Endothelial cell of umbilical vein (primary cell): ENCODE measurements at regions of chr17 and their contacts with region 1.

Region 1: GRCh38 chr17:62819475-62820212 is 11.5 kb upstream of the MARCHF10 start:
- DNase-seq: peak; percentile 90
- H3K4me3 ChIP-seq: peak overlapping the region in 1 of 3 experiments; percentile 25
- H3K27ac ChIP-seq: peak overlapping the region; percentile 85
- H3K4me1 ChIP-seq: peaks cover 33% of the 10 kb centered on the region
- H3K27me3 ChIP-seq: no peaks in the 10 kb centered on the region
- CTCF ChIP-seq: no peak
- POLR2A ChIP-seq: no peak

Region 2: DNA sequence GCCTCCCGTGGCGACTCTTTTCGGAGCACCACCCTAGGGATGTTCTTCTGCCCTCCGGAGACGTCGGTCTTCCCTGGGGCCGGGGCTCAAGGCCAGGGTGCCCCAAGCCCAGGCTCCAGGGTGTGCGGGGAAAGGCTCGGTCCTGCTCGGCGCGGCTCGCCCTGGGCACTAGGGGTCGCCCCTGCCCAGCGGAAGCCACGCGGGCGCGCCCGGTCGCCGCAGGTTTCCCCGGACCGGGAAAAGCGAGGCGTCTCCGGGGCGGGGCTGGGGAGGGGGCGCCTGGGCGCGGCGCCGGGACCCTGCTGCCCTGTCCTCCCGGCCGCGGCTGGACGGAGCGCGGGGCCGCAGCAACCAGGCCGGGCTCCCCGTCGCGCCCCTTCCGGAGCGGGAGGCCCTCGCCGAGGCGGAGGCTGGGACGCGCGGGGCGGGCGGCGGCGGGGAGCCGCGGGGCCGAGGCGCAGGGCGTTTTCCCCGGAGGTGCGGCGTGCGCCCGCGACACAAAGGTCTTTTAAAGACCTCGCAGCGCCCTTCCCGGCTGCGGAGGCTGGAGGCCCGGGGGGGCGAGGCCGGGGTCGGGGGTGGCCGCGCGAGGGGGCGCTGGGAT is 115.8 kb before region 1 on chr17:
- CTCF ChIA-PET with region 1: no interaction called
- POLR2A ChIA-PET with region 1: no interaction called
- dilution Hi-C with region 1: no loop called
- intact Hi-C with region 1: loop called (anchors 5 kb)
- DNase-seq: peak; percentile 44
- H3K4me3 ChIP-seq: peak overlapping the region; percentile 23 to 56 (median 48)
- H3K27ac ChIP-seq: peak overlapping the region; percentile 14
- H3K4me1 ChIP-seq: peaks cover 32% of the 10 kb centered on the region
- H3K27me3 ChIP-seq: peaks cover 0 to 8% of the 10 kb centered on the region in 2 experiments
- CTCF ChIP-seq: peak; percentile 79 to 87
- POLR2A ChIP-seq: no peak

Region 3: GRCh38 chr17:62807539-62808195 is 12.0 kb before region 1 on chr17:
- CTCF ChIA-PET with region 1: no interaction called
- POLR2A ChIA-PET with region 1: no interaction called
- dilution Hi-C with region 1: no loop called
- intact Hi-C with region 1: loop called (anchors 1 kb)
- DNase-seq: no peak
- H3K4me3 ChIP-seq: peak overlapping the region in 1 of 3 experiments; percentile 15
- H3K27ac ChIP-seq: no peak overlapping the region
- H3K4me1 ChIP-seq: no peaks in the 10 kb centered on the region
- H3K27me3 ChIP-seq: no peaks in the 10 kb centered on the region
- CTCF ChIP-seq: no peak
- POLR2A ChIP-seq: no peak

Region 4: DNA sequence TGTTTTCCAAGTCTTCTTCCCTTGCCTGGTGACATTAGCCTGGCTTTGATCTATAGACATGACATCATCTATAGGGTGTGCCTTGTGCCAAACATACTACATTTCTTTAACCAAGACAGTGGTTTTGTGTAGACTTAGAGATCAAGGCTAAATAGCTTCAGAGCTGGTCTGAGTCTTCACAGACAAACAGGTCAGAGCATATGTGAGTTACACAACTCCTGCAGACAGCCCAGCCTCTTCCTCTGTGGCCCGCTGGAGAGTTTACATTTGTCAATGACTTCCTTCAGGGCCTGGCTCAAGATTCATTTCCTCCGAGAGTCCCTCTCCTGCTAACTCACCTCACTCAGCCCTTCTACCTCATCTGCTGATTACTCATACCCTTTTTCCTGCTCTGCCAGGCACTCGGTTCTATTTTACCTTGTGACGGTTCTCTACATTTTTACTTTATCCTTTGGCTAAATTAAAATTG is 73.3 kb after region 1 on chr17:
- CTCF ChIA-PET with region 1: no interaction called
- POLR2A ChIA-PET with region 1: no interaction called
- dilution Hi-C with region 1: no loop called
- intact Hi-C with region 1: loop called (anchors 5 kb)
- DNase-seq: peak; percentile 83
- H3K4me3 ChIP-seq: no peak overlapping the region
- H3K27ac ChIP-seq: peak overlapping the region; percentile 10
- H3K4me1 ChIP-seq: peaks cover 37% of the 10 kb centered on the region
- H3K27me3 ChIP-seq: no peaks in the 10 kb centered on the region
- CTCF ChIP-seq: no peak
- POLR2A ChIP-seq: no peak

Region 5: GRCh38 chr17:62968445-62968923 is 148.8 kb after region 1 on chr17:
- CTCF ChIA-PET with region 1: no interaction called
- POLR2A ChIA-PET with region 1: no interaction called
- dilution Hi-C with region 1: no loop called
- intact Hi-C with region 1: loop called (anchors 1 kb)
- DNase-seq: peak; percentile 90
- H3K4me3 ChIP-seq: no peak overlapping the region
- H3K27ac ChIP-seq: no peak overlapping the region
- H3K4me1 ChIP-seq: peaks cover 19% of the 10 kb centered on the region
- H3K27me3 ChIP-seq: no peaks in the 10 kb centered on the region
- CTCF ChIP-seq: peak; percentile 78 to 80
- POLR2A ChIP-seq: no peak